Calu3 (cell line): ENCODE measurements at regions of chr16 and their contacts with region 1.

Region 1: DNA sequence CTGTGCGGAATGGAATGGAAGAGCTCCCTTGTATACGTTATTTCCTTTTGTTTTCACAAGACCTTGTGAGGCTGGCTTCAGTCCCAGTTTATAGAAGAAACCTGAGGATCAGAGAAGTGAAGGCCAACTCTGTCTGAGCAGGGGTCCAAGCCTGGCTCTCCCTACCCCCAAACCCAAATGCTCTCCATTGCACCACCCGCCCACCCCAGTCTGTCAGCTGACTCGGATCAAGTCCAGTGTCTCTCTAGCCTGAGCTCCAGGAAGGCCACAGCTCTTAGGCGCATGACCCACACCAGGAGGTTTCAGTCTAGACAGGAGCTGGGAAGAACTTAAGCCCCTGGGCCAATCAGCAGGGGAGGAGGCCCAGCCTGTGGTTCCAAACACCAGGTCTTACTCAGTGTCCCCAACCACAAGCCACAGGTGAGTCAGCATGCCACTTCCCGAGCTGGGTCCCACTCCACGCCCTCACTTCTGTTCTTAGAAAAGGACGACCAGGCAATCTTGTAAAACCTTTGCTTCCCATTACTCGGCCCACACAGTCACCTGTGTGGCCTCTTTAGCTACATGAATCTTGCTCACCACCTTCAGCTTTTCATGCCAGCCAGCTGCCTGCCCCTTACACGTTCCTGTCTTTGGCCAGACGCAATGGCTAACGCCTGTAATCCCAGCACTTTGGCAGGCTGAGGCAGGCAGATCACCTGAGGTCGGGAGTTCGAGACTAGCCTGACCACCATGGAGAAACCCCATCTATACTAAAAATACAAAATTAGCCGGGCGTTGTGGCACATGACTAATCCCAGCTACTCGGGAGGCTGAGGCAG is 27.8 kb downstream of the TK2 start:
- DNase-seq: peak; percentile 89
- H3K4me3 Mint-ChIP-seq: peak overlapping the region; percentile 47
- H3K27ac Mint-ChIP-seq: peak overlapping the region; percentile 96
- H3K4me1 Mint-ChIP-seq: peaks cover 44% of the 10 kb centered on the region
- H3K27me3 Mint-ChIP-seq: no peaks in the 10 kb centered on the region
- CTCF ChIP-seq: no peak

Region 2: DNA sequence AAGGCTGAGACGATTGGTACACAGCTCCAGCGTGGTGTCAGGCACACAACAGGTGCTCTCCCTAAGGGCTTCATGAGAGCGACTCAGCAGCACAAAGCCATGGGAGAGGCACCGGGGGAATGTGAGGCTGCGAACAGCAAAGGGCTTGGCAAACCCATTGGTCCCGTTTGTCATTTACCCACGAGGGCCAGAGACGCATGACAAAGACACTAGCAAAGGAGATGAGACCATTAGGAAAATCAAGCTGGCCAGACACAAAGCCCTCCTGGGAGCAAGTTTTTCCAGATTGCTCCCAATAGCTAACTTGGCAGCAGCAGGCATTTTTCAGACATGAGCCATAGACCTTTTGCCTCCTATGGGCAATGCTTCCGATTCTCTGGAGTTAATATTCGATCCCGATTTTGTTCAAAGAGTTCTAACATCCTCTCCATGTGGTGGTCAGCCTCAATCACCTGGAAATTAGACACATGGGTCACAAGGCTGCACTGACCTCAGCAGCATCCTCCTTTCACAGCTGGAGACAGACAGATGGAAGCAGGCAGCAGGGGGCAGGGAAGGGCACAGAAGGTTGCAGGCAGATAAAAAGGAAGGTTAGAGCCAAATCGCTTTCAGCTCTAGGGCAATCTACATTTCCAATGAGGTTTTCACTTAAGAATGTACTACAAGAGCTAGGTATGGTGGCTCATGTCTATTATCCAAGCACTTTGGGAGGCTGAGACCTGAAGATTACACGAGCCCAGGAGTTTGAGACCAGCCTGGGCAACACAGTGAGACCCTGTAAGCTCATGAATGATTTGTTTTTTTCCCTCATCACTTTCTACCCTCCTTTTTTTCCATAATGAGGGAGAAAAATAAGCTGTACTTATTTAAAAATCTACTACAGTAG is 10.3 kb before region 1 on chr16:
- CTCF ChIA-PET with region 1: interaction called, 21 read pairs
- intact Hi-C with region 1: no loop called
- DNase-seq: peak; percentile 80
- H3K4me3 Mint-ChIP-seq: peak overlapping the region; percentile 43
- H3K27ac Mint-ChIP-seq: peak overlapping the region; percentile 99
- H3K4me1 Mint-ChIP-seq: peaks cover 95% of the 10 kb centered on the region
- H3K27me3 Mint-ChIP-seq: no peaks in the 10 kb centered on the region
- CTCF ChIP-seq: no peak

Region 3: GRCh38 chr16:66552286-66553177 is 30.4 kb after region 1 on chr16 and contains the start of gene CKLF:
- CTCF ChIA-PET with region 1: interaction called, 20 read pairs
- intact Hi-C with region 1: loop called (anchors 2 kb)
- DNase-seq: peak; percentile 95
- H3K4me3 Mint-ChIP-seq: peak within 1 kb of the TSS; percentile 92
- H3K27ac Mint-ChIP-seq: peak within 1 kb of the TSS; percentile 96
- H3K4me1 Mint-ChIP-seq: peaks cover 65% of the 10 kb centered on the region
- H3K27me3 Mint-ChIP-seq: no peaks in the 10 kb centered on the region
- CTCF ChIP-seq: no peak
- total RNA-seq, gene CKLF: 217 and 293 TPM in 2 replicates

Region 4: DNA sequence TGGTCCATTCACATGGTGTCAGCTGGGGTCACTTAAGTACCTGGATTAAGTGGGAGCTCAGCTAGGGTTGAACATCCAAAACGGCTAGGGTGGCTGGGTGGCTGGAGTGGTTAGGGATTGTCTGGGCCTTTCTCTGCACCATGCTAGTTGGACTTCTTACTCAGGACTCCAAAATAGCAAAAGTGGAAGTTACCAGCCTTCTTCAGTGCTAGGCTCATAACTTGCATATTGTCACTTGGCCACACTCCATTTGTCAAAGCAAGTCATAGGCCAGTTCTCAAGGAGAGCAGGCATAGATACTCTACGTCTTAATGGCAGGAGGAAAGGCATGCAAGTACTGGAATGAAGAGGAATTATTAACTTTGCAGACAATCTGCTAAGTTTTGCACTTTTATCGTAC is 1644.1 kb after region 1 on chr16:
- CTCF ChIA-PET with region 1: no interaction called
- intact Hi-C with region 1: no loop called
- DNase-seq: no peak
- H3K4me3 Mint-ChIP-seq: no peak overlapping the region
- H3K27ac Mint-ChIP-seq: no peak overlapping the region
- H3K4me1 Mint-ChIP-seq: no peaks in the 10 kb centered on the region
- H3K27me3 Mint-ChIP-seq: no peaks in the 10 kb centered on the region
- CTCF ChIP-seq: no peak